Pancreas (tissue), 10 donors: ENCODE measurements at regions of chr19 and their contacts with region 1.

Region 1: GRCh38 chr19:53103198-53103944 is at the start of gene ZNF160:
- DNase-seq: peak; percentile 97 to 99 (median 98)
- ATAC-seq: peak; percentile 95 to 99 (median 98)
- H3K4me3 ChIP-seq: peak within 1 kb of the TSS; percentile 59 to 84 (median 66)
- H3K27ac ChIP-seq: peak within 1 kb of the TSS; percentile 69 to 95 (median 78)
- H3K4me1 ChIP-seq: peaks cover 5 to 14% (median 6%) of the 10 kb centered on the region in 3 donors
- H3K27me3 ChIP-seq: no peaks in the 10 kb centered on the region
- CTCF ChIP-seq: no peak
- total RNA-seq, gene ZNF160: 6.4 to 18.7 (median 12.5) TPM

Region 2: DNA sequence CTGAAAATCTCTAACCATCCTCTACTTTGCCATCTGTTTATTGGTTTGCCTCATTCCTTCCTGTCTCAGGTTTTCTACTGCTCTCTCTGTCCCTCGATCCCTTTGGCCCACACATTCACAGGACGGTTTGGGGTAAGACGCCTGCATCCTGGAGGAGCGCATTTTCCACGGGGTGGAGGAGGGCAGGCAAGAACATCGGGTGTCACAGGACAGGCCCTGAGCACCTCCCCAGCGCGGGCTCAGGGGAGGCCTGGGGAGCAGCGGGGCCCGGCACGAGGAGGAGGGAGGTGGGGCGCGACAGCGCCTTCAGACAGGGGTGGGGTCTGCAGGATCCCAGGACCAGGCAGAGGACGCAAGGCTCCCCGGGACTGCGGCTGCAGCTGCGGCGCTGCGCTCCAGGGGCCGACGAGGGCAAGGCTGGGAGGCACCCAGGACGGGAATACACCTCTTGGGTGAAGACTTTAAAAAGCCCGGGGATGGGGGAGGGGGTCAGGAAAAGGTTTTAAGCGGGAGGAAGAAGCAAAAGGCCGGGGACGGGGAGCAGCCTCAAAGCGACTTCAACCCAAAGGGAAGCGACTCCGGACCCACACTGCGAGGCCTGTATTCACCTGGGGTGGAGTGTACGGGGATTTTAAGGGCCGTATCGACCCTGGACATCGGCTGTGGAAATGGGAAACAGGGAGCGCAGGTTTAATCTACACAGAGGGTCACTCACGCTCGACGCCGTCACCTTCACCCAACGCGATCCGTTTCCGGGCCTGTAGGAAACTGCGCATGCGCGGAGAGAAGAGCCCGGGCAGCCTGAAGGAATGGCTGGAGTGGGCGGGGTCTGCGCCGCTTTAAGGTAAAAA is 29.0 kb after region 1 on chr19 and contains the start of gene ZNF415:
- intact Hi-C with region 1: loop called in 1 of 3 experiments (anchors 2 kb)
- DNase-seq: peak; percentile 75 to 95 (median 86)
- ATAC-seq: peak; percentile 98 to 99 (median 98)
- H3K4me3 ChIP-seq: peak within 1 kb of the TSS; percentile 40 to 69 (median 56)
- H3K27ac ChIP-seq: peak within 1 kb of the TSS; percentile 22 to 58 (median 42)
- H3K4me1 ChIP-seq: peaks cover 0 to 3% (median 0%) of the 10 kb centered on the region in 3 donors
- H3K27me3 ChIP-seq: no peaks in the 10 kb centered on the region
- CTCF ChIP-seq: no peak
- total RNA-seq, gene ZNF415: 1.9 to 7.9 (median 4.5) TPM

Region 3: GRCh38 chr19:53147645-53148044 is 44.3 kb after region 1 on chr19:
- intact Hi-C with region 1: no loop called
- DNase-seq: no peak
- ATAC-seq: no peak
- H3K4me3 ChIP-seq: no peak overlapping the region
- H3K27ac ChIP-seq: no peak overlapping the region
- H3K4me1 ChIP-seq: no peaks in the 10 kb centered on the region
- H3K27me3 ChIP-seq: no peaks in the 10 kb centered on the region
- CTCF ChIP-seq: no peak